ENCODE measurements at regions of chr16 and their contacts with region 1.

Region 1: DNA sequence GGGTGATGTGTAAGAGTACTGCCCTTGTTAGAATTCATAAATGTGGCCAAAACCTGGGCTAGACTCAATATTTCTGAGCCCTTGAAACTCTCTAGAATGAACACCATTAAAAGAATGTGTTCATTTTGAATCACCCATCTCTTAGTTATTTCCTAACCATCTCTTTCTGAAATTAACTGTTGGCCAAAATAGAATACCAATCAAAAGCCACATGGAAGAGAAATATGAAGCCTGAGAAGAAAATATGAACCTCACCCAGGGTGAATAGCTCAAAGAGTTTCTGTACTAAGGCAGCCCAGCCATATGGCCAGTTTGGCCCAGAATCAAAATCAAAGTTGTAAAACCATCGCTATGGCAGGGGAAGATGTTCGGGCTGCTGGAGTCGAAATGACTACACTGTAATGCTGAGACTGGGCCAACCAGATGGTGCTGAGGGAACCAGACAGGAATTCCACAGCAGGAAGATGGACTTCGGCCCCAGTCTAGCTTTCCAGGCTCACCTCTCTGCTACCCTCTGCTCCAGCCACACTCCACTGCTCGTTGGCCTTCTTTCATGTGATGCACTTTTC is 154.3 kb upstream of the ZFHX3 start:
- DNase-seq: peak; percentile 97
- ATAC-seq: peak; percentile 94
- H3K4me3 ChIP-seq: no peak overlapping the region
- H3K27ac ChIP-seq: peak overlapping the region; percentile 10; the same call in 1 of the 2 replicates
- H3K4me1 ChIP-seq: peaks cover 2% of the 10 kb centered on the region; the same call in 1 of the 2 replicates
- H3K27me3 ChIP-seq: no peaks in the 10 kb centered on the region
- CTCF ChIP-seq: no peak
- POLR2A ChIP-seq: no peak
- RAD21 ChIP-seq: no peak

Region 2: GRCh38 chr16:72938795-72939164 is 263.5 kb before region 1 on chr16:
- CTCF ChIA-PET with region 1: no interaction called
- POLR2A ChIA-PET with region 1: no interaction called
- dilution Hi-C with region 1: no loop called
- in situ Hi-C with region 1: no loop called
- intact Hi-C with region 1: loop called (anchors 10 kb)
- DNase-seq: peak; percentile 93
- ATAC-seq: peak; percentile 93
- H3K4me3 ChIP-seq: peak overlapping the region; percentile 22; the same call in 1 of the 2 replicates
- H3K27ac ChIP-seq: peak overlapping the region; percentile 78
- H3K4me1 ChIP-seq: peaks cover 16% of the 10 kb centered on the region
- H3K27me3 ChIP-seq: no peaks in the 10 kb centered on the region
- CTCF ChIP-seq: no peak
- POLR2A ChIP-seq: no peak
- RAD21 ChIP-seq: peak; percentile 24; the same call in 1 of the 2 replicates

Region 3: DNA sequence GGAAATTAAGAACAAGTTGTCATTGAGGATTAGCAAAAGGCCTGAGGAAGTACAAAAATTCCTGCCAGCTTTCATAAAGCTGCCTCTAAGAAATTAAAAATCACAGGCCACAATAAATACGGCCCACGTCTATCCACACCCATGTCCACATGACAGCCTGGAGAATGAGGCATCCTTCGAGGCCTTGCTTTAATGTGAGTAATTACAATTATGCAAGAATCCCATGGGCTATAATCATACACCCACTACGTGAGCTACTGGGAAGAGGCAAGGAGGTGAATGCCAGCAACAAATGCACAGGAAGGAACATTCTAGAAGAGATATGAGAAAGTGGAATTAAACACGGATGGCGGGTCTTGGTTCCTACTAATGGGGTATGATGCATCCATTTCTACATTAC is 88.9 kb before region 1 on chr16:
- CTCF ChIA-PET with region 1: no interaction called
- POLR2A ChIA-PET with region 1: no interaction called
- dilution Hi-C with region 1: no loop called
- in situ Hi-C with region 1: no loop called
- intact Hi-C with region 1: no loop called
- DNase-seq: peak; percentile 25
- ATAC-seq: no peak
- H3K4me3 ChIP-seq: no peak overlapping the region
- H3K27ac ChIP-seq: no peak overlapping the region
- H3K4me1 ChIP-seq: no peaks in the 10 kb centered on the region
- H3K27me3 ChIP-seq: peaks cover 2% of the 10 kb centered on the region; the same call in 1 of the 2 replicates
- CTCF ChIP-seq: no peak
- POLR2A ChIP-seq: no peak
- RAD21 ChIP-seq: no peak

Region 4: DNA sequence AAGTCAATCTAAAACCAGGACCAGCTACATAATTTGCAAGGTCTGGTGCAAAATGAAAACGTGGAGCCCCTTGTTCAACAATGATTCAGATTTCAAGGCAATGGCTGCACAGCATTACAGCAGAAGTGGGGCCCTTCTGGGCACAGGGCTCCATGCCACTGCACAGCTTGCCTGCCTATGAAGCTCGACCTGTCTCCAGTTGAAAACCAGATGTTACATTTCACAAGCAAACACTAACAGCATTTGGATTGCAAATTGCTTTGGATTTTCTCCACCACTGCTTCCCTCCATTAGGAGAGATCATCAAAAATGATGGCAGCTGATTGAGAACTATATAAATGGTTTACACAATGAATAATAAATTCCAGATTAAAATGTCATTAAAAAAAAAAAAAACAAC is 397.1 kb after region 1 on chr16:
- CTCF ChIA-PET with region 1: no interaction called
- POLR2A ChIA-PET with region 1: no interaction called
- dilution Hi-C with region 1: no loop called
- in situ Hi-C with region 1: no loop called
- intact Hi-C with region 1: loop called (anchors 5 kb)
- DNase-seq: no peak
- ATAC-seq: no peak
- H3K4me3 ChIP-seq: no peak overlapping the region
- H3K27ac ChIP-seq: no peak overlapping the region
- H3K4me1 ChIP-seq: no peaks in the 10 kb centered on the region
- H3K27me3 ChIP-seq: no peaks in the 10 kb centered on the region
- CTCF ChIP-seq: no peak
- POLR2A ChIP-seq: no peak
- RAD21 ChIP-seq: no peak

Measured in IMR-90 (cell line).